ENCODE measurements at regions of chr14 and their contacts with region 1.

Region 1: DNA sequence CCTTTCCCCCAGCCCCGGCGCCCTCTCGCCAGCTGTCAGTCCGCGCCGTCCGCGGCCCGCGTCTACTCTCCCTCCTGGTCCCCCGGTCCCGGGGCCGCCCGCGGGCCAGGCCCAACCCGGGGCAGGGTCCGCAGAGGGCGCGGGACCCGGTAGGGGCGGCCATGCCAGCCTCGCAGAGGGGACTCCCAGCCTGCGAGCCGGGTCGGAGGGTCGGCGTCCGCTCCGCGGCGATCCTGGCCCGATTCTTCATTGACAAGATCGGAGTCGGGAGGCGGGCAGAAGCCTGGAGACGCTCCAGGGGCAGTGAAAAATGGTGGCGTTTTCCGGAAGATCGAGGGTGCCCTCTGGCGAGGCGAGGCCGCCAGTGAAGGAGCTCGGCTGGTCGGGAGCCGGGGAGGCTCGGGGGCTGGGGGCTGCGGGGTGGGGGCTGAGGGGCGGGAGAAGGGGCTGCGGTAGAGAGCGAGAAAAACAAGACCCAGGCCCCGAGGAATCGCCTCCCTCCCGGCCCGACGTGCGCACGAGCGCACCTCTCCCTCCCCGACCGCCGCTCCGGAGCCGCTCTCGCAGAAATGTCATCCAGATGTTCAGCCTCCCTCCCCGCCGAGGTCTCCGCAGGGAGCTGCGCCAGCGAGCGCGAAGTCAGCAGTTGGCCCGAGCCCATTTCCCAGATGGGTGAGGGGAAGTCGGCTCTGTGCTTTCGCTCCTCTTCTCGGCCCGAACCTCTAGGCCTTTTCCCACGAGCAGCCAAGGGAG is 647 bp upstream of the TGFB3 start:
- DNase-seq: peak; percentile 79
- ATAC-seq: peak; percentile 69
- H3K4me3 Mint-ChIP-seq: peak overlapping the region; percentile 87
- H3K27ac Mint-ChIP-seq: peak overlapping the region; percentile 72
- H3K4me1 Mint-ChIP-seq: peaks cover 64% of the 10 kb centered on the region
- H3K27me3 Mint-ChIP-seq: no peaks in the 10 kb centered on the region
- CTCF ChIP-seq: no peak

Region 2: DNA sequence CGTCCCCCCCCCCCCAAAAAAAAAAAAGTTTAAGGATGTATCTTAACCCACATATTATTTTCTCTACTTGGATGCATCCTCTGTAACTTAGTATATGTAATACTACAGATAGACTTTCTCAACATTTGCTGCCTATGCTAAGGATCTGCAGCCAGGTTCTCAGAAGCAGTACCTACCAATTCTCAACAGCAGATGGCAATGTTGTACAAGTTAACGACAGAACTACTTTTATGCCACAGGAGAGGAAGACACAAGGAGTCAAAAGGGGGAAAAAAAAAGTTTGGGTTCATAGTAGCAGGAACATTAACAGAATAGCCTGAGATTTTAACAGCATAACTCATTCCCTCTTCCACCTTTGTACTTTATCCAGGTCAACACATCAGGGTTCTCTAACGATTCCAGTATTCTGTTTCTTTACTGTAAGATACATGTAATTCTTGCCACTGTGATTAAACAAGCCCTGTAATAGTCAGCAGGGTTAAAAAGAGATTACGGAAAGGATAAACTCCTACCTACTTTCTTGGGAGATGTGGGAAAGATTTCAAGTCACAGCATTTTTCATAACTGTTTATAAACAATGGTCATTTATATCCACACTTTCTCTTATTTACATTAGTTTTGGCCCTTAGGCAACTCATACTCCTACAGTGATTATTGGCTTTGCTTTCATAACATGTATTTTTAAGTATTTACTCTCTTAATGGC is 849.9 kb before region 1 on chr14:
- CTCF ChIA-PET with region 1: no interaction called
- POLR2A ChIA-PET with region 1: no interaction called
- intact Hi-C with region 1: loop called (anchors 5 kb)
- DNase-seq: no peak
- ATAC-seq: peak; percentile 87
- H3K4me3 Mint-ChIP-seq: no peak overlapping the region
- H3K27ac Mint-ChIP-seq: no peak overlapping the region
- H3K4me1 Mint-ChIP-seq: peaks cover 16% of the 10 kb centered on the region
- H3K27me3 Mint-ChIP-seq: no peaks in the 10 kb centered on the region
- CTCF ChIP-seq: peak; percentile 51

Region 3: DNA sequence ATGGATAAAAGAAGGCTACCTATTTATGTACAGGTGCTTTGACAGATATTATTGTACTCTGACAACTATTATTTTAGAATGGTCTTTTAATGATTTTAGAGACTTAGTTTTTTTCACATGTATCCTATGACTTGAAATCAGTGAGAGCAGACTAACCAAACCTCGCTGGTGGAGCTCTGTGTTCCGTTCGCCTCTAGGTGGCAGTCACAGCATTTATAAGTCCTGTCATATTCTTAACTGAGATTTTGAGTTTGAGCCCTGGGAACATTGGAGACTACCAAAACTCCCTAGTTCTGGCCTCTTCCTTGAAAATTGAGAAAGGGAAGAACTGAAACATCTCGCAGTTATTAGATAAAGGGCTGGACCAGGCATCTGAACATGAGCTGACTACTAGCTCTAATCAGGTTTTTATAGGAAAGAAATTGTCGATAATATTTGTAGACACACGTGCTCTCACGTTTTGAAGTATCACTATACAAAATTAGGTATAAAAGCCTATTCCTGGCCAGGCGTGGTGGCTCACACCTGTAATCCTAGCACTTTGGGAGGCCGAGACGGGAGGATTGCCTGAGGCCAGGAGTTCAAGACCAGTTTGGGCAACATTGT is 273.1 kb before region 1 on chr14:
- CTCF ChIA-PET with region 1: interaction called, 181 read pairs
- POLR2A ChIA-PET with region 1: interaction called, 16 read pairs
- intact Hi-C with region 1: loop called (anchors 1 kb)
- DNase-seq: no peak
- ATAC-seq: peak; percentile 70
- H3K4me3 Mint-ChIP-seq: no peak overlapping the region
- H3K27ac Mint-ChIP-seq: no peak overlapping the region
- H3K4me1 Mint-ChIP-seq: no peaks in the 10 kb centered on the region
- H3K27me3 Mint-ChIP-seq: no peaks in the 10 kb centered on the region
- CTCF ChIP-seq: peak; percentile 58

Region 4: GRCh38 chr14:75960231-75960630 is 22.2 kb before region 1 on chr14:
- CTCF ChIA-PET with region 1: interaction called, 27 read pairs
- POLR2A ChIA-PET with region 1: interaction called, 5 read pairs
- intact Hi-C with region 1: loop called (anchors 1 kb)
- DNase-seq: no peak
- ATAC-seq: peak; percentile 93
- H3K4me3 Mint-ChIP-seq: peak overlapping the region; percentile 70
- H3K27ac Mint-ChIP-seq: peak overlapping the region; percentile 91
- H3K4me1 Mint-ChIP-seq: peaks cover 51% of the 10 kb centered on the region
- H3K27me3 Mint-ChIP-seq: no peaks in the 10 kb centered on the region
- CTCF ChIP-seq: no peak

Region 5: DNA sequence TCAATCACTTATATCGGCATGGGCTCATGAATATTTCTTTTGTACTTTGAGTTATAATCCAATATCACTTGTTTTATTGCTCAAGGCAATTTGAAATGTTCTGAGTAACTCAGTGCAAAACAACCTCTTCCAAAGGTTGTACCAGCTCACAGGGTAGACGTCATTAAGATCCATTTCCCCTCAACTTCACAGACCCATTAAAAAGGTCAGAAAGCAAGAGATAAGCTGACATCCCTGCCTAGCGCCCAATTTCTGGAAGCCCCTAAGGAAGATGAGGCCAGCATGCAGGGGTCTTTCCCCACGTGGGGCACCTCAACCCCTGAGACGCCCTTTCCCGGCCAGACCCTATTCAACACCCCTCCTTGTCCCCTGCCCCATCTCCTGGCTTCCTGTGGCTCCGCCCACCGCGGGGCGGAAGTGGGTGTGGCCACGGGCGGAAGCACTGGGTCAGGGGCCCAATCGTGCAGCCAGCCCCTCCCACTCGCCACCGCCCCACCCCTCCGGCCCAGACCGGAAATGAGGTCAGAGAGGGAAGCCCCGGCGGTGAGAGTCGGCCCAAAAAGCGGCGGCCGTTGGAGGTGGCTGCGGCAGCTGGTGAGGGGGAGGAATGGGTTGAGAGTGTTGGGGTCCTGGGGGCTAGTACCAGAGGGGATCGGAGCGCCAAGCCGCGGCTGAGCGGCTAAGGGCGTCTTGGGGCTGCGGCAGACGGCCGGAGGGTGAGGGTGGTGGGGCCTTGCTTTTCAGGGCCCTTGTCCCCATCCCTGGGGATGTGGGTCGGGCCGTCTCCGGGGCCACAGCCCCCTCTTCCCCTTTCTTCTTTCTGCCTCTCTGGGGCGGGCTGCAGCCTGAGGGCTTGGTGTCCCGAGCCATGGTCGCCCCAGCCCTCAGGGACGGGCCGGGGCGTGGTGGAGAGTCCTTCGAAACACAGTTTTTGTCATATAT is 169.2 kb after region 1 on chr14 and contains the start of gene GPATCH2L:
- CTCF ChIA-PET with region 1: no interaction called
- POLR2A ChIA-PET with region 1: no interaction called
- intact Hi-C with region 1: loop called (anchors 5 kb)
- DNase-seq: peak; percentile 97
- ATAC-seq: peak; percentile 93
- H3K4me3 Mint-ChIP-seq: peak within 1 kb of the TSS; percentile 97
- H3K27ac Mint-ChIP-seq: peak within 1 kb of the TSS; percentile 94
- H3K4me1 Mint-ChIP-seq: peaks cover 53% of the 10 kb centered on the region
- H3K27me3 Mint-ChIP-seq: no peaks in the 10 kb centered on the region
- CTCF ChIP-seq: no peak
- total RNA-seq, gene GPATCH2L: 64.8 and 82.3 TPM in 2 replicates

Measured in activated B cell treated with CpG ODN at 0.5 μM for 24 hours (primary cell).